ENCODE measurements at regions of chr2 and their contacts with region 1.

Region 1: GRCh38 chr2:30711646-30712085 is 95.6 kb downstream of the CAPN13 start:
- DNase-seq: peak; percentile 95
- ATAC-seq: peak; percentile 69
- H3K4me3 ChIP-seq: no peak overlapping the region
- H3K27ac ChIP-seq: no peak overlapping the region
- H3K4me1 ChIP-seq: no peaks in the 10 kb centered on the region; the same call in 1 of the 2 replicates
- H3K27me3 ChIP-seq: no peaks in the 10 kb centered on the region
- CTCF ChIP-seq: peak; percentile 99

Region 2: GRCh38 chr2:30165050-30165520 is 546.6 kb before region 1 on chr2:
- CTCF ChIA-PET with region 1: interaction called, 86 read pairs
- POLR2A ChIA-PET with region 1: no interaction called
- intact Hi-C with region 1: loop called (anchors 1 kb)
- DNase-seq: peak; percentile 89
- ATAC-seq: peak; percentile 97
- H3K4me3 ChIP-seq: no peak overlapping the region
- H3K27ac ChIP-seq: no peak overlapping the region
- H3K4me1 ChIP-seq: no peaks in the 10 kb centered on the region
- H3K27me3 ChIP-seq: no peaks in the 10 kb centered on the region
- CTCF ChIP-seq: peak; percentile 96

Region 3: GRCh38 chr2:30447149-30448045 is 264.3 kb before region 1 on chr2 and contains the start of gene LCLAT1:
- CTCF ChIA-PET with region 1: interaction called, 4 read pairs
- POLR2A ChIA-PET with region 1: no interaction called
- intact Hi-C with region 1: loop called (anchors 1 kb)
- DNase-seq: peak; percentile 79
- ATAC-seq: peak; percentile 95
- H3K4me3 ChIP-seq: peak within 1 kb of the TSS; percentile 72
- H3K27ac ChIP-seq: peak within 1 kb of the TSS; percentile 19
- H3K4me1 ChIP-seq: peaks cover 27% of the 10 kb centered on the region
- H3K27me3 ChIP-seq: no peaks in the 10 kb centered on the region
- CTCF ChIP-seq: no peak
- total RNA-seq, gene LCLAT1: 19.5 and 22.0 TPM in 2 replicates

Region 4: GRCh38 chr2:30631051-30631671 is 80.5 kb before region 1 on chr2:
- CTCF ChIA-PET with region 1: no interaction called
- POLR2A ChIA-PET with region 1: no interaction called
- intact Hi-C with region 1: no loop called
- DNase-seq: no peak
- ATAC-seq: no peak
- H3K4me3 ChIP-seq: no peak overlapping the region
- H3K27ac ChIP-seq: no peak overlapping the region
- H3K4me1 ChIP-seq: no peaks in the 10 kb centered on the region
- H3K27me3 ChIP-seq: no peaks in the 10 kb centered on the region
- CTCF ChIP-seq: no peak

Region 5: DNA sequence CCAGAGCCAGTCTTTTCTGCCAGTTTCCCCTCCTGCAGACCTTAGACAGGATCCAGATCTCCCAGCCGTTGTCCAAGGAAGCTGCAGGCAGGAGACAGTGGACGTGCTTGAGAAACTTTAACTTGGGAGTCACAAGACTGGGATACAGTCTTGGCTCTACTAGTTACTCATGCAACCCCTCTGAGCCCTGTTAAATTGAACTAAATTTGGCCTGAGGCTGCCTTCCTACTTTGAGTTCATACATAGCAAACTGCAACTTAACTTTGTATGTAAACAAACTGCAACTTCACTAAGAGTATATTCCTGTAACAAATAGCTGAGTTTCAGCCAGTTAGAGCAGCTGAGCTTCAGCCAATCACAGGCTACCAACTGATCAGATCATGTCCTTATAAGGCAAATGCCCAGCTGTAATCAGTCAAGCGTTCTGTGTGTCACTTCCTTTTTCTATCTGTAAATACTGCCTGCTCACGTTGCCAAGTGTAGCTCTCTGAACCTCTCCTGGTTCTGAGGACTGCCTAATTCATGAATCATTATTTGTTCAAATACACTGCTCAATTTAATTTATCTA is 45.3 kb before region 1 on chr2:
- CTCF ChIA-PET with region 1: interaction called, 4 read pairs
- POLR2A ChIA-PET with region 1: no interaction called
- intact Hi-C with region 1: loop called (anchors 2 kb)
- DNase-seq: peak; percentile 98
- ATAC-seq: peak; percentile 76
- H3K4me3 ChIP-seq: 0 out of 2 replicates have a peak overlapping the region, but pooled peaks have one; percentile 12
- H3K27ac ChIP-seq: peak overlapping the region; percentile 98
- H3K4me1 ChIP-seq: peaks cover 49% of the 10 kb centered on the region
- H3K27me3 ChIP-seq: no peaks in the 10 kb centered on the region
- CTCF ChIP-seq: no peak

Region 6: GRCh38 chr2:31170071-31170698 is 458.5 kb after region 1 on chr2:
- CTCF ChIA-PET with region 1: interaction called, 17 read pairs
- POLR2A ChIA-PET with region 1: no interaction called
- intact Hi-C with region 1: no loop called
- DNase-seq: peak; percentile 72
- ATAC-seq: peak; percentile 90
- H3K4me3 ChIP-seq: no peak overlapping the region
- H3K27ac ChIP-seq: no peak overlapping the region
- H3K4me1 ChIP-seq: no peaks in the 10 kb centered on the region
- H3K27me3 ChIP-seq: peaks cover 7% of the 10 kb centered on the region; the same call in 1 of the 2 replicates
- CTCF ChIP-seq: peak; percentile 91

Region 7: DNA sequence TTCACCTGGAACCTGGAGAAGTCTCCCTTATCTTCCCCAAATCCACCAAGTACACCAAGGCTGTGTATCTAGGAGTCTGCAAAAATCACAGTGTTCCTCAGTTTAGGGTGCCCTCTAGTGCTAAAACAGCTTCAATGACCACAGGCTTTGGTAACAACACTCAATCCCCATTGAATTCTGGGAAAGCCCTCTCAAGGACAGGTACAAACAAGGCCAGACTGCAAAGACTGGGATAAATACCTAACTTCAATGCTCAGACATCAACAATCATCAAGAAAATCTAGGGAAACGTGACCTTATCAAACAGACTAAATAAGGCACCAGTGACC is 1018.1 kb after region 1 on chr2:
- CTCF ChIA-PET with region 1: interaction called, 5 read pairs
- POLR2A ChIA-PET with region 1: no interaction called
- intact Hi-C with region 1: loop called (anchors 10 kb)
- DNase-seq: peak; percentile 74
- ATAC-seq: peak; percentile 82
- H3K4me3 ChIP-seq: no peak overlapping the region
- H3K27ac ChIP-seq: no peak overlapping the region
- H3K4me1 ChIP-seq: no peaks in the 10 kb centered on the region
- H3K27me3 ChIP-seq: no peaks in the 10 kb centered on the region
- CTCF ChIP-seq: peak; percentile 80

Measured in PC-3 (cell line).